HepG2 (cell line): ENCODE measurements at regions of chr6 and their contacts with region 1.

Region 1: GRCh38 chr6:39892490-39893129 is 41.7 kb downstream of the MOCS1 start:
- DNase-seq: peak; percentile 50
- ATAC-seq: peak; percentile 87
- H3K4me3 ChIP-seq: no peak overlapping the region
- H3K27ac ChIP-seq: no peak overlapping the region
- H3K4me1 ChIP-seq: peaks cover 7% of the 10 kb centered on the region
- H3K27me3 ChIP-seq: no peaks in the 10 kb centered on the region
- CTCF ChIP-seq: peak; percentile 89
- EP300 ChIP-seq: no peak
- POLR2A ChIP-seq: no peak
- RAD21 ChIP-seq: peak; percentile 85

Region 2: DNA sequence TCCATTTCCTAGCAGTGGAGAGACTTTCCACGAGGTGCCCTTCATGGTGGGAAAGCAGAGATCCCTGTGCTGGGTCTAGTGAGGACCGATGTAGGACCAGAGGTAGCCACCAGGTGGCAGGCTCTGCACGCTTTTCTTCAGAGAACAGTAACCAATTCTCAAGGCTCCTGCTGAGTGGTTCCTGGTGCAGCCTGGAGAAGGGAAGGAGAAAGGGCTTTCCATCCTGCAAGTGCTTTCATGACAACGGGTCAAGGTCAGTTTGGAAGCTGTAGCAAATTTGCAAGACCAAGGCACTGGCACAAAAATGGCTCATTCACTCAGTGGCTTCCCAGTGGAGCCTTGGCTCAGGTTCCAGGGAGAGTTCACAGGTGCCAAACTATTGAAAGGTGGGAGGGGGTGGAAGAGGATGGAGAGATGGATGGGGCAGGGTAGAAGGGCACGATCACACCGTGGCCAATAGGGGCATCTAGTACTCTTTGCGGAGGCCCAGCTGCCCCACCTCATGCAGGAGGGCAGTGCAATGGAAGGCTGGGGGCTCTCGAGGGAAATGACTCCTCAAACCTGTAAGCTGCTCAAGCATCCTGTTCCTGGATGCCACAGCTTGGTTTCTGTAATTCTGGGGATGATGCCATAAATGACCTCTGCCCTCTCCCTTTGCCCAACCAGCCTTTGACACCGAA is 544.6 kb before region 1 on chr6:
- CTCF ChIA-PET with region 1: interaction called, 19 read pairs
- POLR2A ChIA-PET with region 1: no interaction called
- in situ Hi-C with region 1: loop called (anchors 10 kb)
- intact Hi-C with region 1: loop called (anchors 1 kb)
- DNase-seq: peak; percentile 46
- ATAC-seq: peak; percentile 91
- H3K4me3 ChIP-seq: no peak overlapping the region
- H3K27ac ChIP-seq: no peak overlapping the region
- H3K4me1 ChIP-seq: no peaks in the 10 kb centered on the region
- H3K27me3 ChIP-seq: no peaks in the 10 kb centered on the region
- CTCF ChIP-seq: peak; percentile 85
- EP300 ChIP-seq: no peak
- POLR2A ChIP-seq: no peak
- RAD21 ChIP-seq: peak; percentile 63; the same call in 1 of the 2 replicates

Region 3: DNA sequence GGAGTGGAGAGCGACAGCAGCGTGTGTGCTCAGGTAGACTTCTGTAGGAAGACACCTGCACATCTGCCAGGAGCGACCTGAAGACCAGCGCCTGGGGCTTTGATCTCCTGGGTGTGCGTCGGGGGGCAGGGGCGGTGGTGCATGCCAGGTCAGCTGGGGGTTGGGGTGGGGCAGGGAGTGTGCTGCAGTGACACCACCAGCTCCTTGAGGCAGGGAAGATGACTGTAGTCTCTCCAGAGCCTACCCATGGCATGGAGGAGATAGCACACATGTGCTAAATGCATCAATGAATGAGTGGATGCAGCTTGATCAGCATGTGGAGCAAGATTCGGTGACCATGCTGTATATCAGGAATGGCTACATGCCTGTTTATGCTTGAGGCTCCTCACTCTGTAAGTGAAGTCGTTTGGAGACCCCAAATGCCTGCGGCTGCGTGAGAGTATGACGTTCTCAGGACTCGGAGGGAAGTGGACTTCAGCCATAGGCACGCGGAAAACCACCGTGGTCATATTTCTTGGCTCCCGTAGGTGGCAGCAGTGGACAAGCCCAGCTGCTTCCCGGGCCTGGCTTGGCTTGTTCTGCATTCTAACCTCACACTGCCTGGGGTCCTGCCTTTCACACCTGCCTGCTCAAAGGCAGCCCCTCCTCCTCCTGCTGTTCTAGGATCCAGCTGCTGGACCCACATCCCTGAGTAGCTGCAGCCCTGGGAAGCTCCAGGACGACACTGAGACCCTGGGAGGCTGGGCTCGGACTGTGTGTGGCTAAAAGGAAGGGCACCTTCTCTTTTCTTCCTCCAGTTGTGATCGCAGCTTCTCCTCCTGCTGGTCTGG is 530.7 kb before region 1 on chr6:
- CTCF ChIA-PET with region 1: interaction called, 23 read pairs
- POLR2A ChIA-PET with region 1: no interaction called
- in situ Hi-C with region 1: loop called (anchors 10 kb)
- intact Hi-C with region 1: loop called (anchors 1 kb)
- DNase-seq: peak; percentile 45
- ATAC-seq: peak; percentile 95
- H3K4me3 ChIP-seq: no peak overlapping the region
- H3K27ac ChIP-seq: no peak overlapping the region
- H3K4me1 ChIP-seq: no peaks in the 10 kb centered on the region
- H3K27me3 ChIP-seq: no peaks in the 10 kb centered on the region
- CTCF ChIP-seq: peak; percentile 92
- EP300 ChIP-seq: no peak
- POLR2A ChIP-seq: no peak
- RAD21 ChIP-seq: peak; percentile 62; the same call in 1 of the 2 replicates

Region 4: DNA sequence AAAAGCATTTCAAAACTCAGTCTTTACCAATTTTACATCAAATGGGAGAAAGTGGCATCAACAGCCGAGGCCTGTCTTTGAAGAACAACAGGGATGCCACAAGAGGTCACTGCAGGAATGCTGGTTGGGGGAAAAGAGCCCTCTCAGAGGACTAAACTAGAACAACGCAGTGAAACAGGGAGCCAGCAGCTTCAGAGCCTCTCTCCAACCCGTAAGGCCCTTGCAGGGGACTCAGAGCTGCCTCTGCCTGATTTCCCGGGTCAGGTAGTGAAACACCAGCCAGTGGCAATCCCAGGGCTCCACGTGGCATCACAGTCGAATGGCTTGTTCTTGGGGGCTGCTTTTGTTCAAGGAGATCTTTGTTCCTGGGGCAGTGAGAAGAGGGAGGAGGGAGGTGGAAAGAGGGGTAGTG is 515.1 kb before region 1 on chr6:
- CTCF ChIA-PET with region 1: interaction called, 12 read pairs
- POLR2A ChIA-PET with region 1: no interaction called
- in situ Hi-C with region 1: no loop called
- intact Hi-C with region 1: loop called (anchors 1 kb)
- DNase-seq: peak; percentile 33
- ATAC-seq: peak; percentile 94
- H3K4me3 ChIP-seq: no peak overlapping the region
- H3K27ac ChIP-seq: no peak overlapping the region
- H3K4me1 ChIP-seq: no peaks in the 10 kb centered on the region
- H3K27me3 ChIP-seq: no peaks in the 10 kb centered on the region
- CTCF ChIP-seq: peak; percentile 81
- EP300 ChIP-seq: no peak
- POLR2A ChIP-seq: no peak
- RAD21 ChIP-seq: peak; percentile 75

Region 5: DNA sequence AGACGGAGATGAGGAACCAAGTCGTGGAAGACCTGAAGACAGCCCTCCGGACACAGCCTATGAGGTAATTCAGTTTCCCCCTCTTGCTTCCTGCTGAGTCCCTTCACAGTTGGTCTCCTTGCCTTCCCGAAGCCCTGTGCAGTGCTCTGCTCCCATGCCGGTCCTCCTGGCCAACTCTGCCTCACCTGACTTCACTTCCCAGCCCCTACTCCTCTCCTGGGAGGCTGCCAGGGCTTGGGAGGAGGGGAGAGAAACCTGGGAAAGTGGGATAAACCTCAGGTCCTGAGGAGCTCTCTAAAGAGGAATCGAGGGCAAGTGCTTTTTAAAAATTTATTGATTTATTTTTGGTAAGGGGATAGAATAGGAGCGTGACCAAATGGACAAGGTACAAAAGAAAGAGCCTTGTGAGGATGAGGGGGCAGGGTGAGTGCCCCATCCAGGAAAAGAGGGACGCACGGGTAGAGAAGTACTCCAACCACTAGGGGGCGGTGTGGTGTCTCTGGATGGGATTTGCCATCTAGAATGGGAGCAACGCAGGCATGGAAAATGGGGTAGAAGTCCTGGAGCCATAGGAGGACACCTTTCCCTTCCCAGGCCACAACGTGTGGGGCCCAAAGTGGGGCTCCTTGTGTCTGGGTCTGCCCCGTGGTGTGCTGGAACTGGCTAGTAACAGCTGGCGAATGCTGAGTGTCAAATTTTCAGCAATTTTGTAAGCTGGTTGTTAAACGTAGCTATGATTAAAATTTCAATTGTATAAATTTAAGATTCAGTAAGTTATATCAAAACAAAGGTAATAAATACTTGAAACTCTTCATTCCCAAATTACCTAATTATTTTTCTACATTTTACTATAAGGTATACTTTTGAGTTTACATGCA is 27.4 kb before region 1 on chr6:
- CTCF ChIA-PET with region 1: interaction called, 28 read pairs
- POLR2A ChIA-PET with region 1: no interaction called
- in situ Hi-C with region 1: no loop called
- intact Hi-C with region 1: loop called (anchors 1 kb)
- DNase-seq: peak; percentile 74
- ATAC-seq: peak; percentile 92
- H3K4me3 ChIP-seq: no peak overlapping the region
- H3K27ac ChIP-seq: no peak overlapping the region
- H3K4me1 ChIP-seq: no peaks in the 10 kb centered on the region
- H3K27me3 ChIP-seq: no peaks in the 10 kb centered on the region
- CTCF ChIP-seq: peak; percentile 86
- EP300 ChIP-seq: no peak
- POLR2A ChIP-seq: no peak
- RAD21 ChIP-seq: peak; percentile 72